Stomach (tissue), 19 donors: ENCODE measurements at regions of chr7 and their contacts with region 1.

Region 1: DNA sequence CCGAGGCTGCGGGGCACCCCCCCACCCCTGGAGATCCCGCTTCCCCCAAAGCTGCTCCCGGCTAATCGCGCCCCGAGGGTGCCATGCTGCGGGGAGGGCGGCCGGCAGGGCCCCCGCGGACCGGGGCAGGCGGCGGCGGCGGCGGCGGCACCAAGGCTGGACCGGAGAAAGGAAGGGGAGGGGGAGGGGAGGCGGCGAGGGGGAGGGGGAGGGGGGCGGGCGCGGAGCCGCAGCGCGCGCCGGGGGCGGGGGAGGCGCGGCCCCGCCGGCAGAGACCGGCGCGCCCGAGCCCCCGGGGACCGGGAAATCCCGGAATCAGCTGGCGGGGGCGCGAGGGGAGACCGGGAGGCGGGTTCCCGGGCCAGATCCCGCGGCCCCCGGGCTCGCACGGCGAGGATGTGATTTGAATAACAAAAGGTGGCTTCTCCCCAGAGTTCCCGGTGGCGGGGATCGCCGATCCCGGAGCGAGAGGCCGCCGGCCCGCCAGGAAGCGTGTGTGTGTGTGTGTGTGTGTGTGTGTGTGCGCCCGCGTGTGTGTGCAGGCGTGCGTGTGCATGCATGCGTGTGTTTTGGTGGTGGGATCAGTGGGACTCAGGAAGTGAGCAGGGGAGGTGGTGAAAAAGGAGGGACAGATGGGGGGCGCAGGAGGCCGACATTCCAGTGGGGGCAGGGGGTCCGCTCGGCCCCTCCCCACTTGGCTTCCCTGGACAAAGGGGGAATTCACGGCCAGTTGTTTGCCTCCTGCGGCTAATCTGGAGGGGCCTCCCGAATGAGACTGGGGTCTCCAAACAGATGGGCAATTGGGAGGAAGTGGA is 99.5 kb downstream of the HIP1 start:
- DNase-seq: peak; percentile 50 to 80
- H3K4me3 ChIP-seq: peak overlapping the region; percentile 67 to 80 (median 72)
- H3K27ac ChIP-seq: peak overlapping the region; percentile 54 to 82 (median 79)
- H3K4me1 ChIP-seq: peaks cover 8 to 19% (median 18%) of the 10 kb centered on the region in 4 donors
- H3K27me3 ChIP-seq: no peaks in the 10 kb centered on the region
- CTCF ChIP-seq: no peak
- EP300 ChIP-seq: no peak
- POLR2A ChIP-seq: no peak

Region 2: DNA sequence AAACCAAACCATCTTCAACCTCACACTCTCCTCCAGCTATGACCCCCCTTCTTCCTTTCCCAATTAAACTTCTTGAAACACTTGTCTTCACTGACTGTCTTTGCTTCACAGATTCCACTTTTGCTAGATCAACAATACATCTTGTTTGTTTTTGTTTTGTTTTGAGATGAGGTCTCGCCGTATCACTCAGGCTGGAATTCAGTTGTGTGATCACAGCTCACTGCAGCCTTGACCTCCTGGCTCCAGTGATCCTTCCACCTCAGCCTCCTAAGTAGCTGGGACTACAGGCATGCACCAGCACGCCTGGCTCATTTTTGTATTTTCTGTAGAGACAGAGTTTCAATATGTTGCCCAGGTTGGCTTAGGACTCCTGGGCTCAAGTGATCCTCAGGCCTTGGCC is 39.8 kb after region 1 on chr7:
- intact Hi-C with region 1: no loop called
- DNase-seq: no peak
- H3K4me3 ChIP-seq: no peak overlapping the region
- H3K27ac ChIP-seq: no peak overlapping the region
- H3K4me1 ChIP-seq: no peaks in the 10 kb centered on the region
- H3K27me3 ChIP-seq: no peaks in the 10 kb centered on the region
- CTCF ChIP-seq: no peak
- EP300 ChIP-seq: no peak
- POLR2A ChIP-seq: no peak

Region 3: DNA sequence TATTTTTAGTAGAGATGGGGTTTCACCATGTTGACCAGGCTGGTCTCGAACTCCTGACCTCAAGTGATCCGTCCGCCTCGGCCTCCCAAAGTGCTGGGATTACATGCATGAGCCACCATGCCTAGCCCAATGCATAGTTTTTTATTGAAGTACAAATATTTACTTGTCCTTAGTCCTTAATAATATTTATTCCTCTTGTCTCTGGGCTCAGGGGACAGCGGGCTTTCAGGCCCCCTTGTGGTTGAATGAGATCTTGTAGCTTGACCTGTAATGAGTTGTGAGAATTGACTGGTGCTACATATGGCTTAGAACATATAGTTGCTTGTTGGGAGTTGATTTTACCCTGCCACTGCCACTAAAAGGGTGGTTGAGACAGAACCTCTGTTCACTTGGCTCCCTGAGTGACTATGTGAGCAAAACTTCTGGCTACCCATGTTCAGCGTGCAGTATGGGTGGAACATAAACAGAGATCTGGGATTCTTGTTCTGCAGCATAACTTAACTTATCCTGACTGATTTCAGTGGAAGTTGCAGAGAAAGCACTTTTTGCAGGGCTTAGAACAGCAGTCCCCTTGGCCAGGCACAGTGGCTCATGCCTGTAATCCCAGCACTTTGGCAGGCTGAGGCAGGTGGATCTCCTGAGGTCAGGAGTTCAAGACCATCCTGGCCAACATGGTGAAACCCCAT is 117.9 kb after region 1 on chr7:
- intact Hi-C with region 1: loop called (anchors 10 kb)
- DNase-seq: peak; percentile 42 to 59
- H3K4me3 ChIP-seq: no peak overlapping the region
- H3K27ac ChIP-seq: no peak overlapping the region
- H3K4me1 ChIP-seq: no peaks in the 10 kb centered on the region
- H3K27me3 ChIP-seq: no peaks in the 10 kb centered on the region
- CTCF ChIP-seq: peak in 4 of 7 experiments; percentile 12 to 35 (median 24)
- EP300 ChIP-seq: no peak
- POLR2A ChIP-seq: no peak

Region 4: GRCh38 chr7:75776295-75776971 is 137.2 kb after region 1 on chr7:
- intact Hi-C with region 1: no loop called
- DNase-seq: no peak
- H3K4me3 ChIP-seq: no peak overlapping the region
- H3K27ac ChIP-seq: no peak overlapping the region
- H3K4me1 ChIP-seq: no peaks in the 10 kb centered on the region
- H3K27me3 ChIP-seq: peaks cover 0 to 5% (median 0%) of the 10 kb centered on the region in 3 donors
- CTCF ChIP-seq: no peak
- EP300 ChIP-seq: no peak
- POLR2A ChIP-seq: no peak

Region 5: GRCh38 chr7:76089923-76090381 is 450.7 kb after region 1 on chr7:
- intact Hi-C with region 1: no loop called
- DNase-seq: peak; percentile 60 to 81
- H3K4me3 ChIP-seq: no peak overlapping the region
- H3K27ac ChIP-seq: peak overlapping the region; percentile 6 to 62 (median 51)
- H3K4me1 ChIP-seq: peaks cover 0 to 7% (median 0%) of the 10 kb centered on the region in 4 donors
- H3K27me3 ChIP-seq: no peaks in the 10 kb centered on the region
- CTCF ChIP-seq: no peak
- EP300 ChIP-seq: no peak
- POLR2A ChIP-seq: no peak